ENCODE measurements at regions of chr21 and their contacts with region 1.

Region 1: GRCh38 chr21:25385911-25386474 is 221.3 kb downstream of the MRPL39 start:
- DNase-seq: peak; percentile 47
- H3K4me3 ChIP-seq: no peak overlapping the region; a peak in 1 of 4 replicates
- H3K27ac ChIP-seq: peak overlapping the region in 1 of 2 experiments; percentile 47; a peak in 1 of 4 replicates
- H3K4me1 ChIP-seq: peaks cover 0 to 6% of the 10 kb centered on the region in 2 experiments; a peak in 3 of 4 replicates
- H3K27me3 ChIP-seq: no peaks in the 10 kb centered on the region
- CTCF ChIP-seq: peak; percentile 82
- EP300 ChIP-seq: no peak
- RAD21 ChIP-seq: peak; percentile 91

Region 2: DNA sequence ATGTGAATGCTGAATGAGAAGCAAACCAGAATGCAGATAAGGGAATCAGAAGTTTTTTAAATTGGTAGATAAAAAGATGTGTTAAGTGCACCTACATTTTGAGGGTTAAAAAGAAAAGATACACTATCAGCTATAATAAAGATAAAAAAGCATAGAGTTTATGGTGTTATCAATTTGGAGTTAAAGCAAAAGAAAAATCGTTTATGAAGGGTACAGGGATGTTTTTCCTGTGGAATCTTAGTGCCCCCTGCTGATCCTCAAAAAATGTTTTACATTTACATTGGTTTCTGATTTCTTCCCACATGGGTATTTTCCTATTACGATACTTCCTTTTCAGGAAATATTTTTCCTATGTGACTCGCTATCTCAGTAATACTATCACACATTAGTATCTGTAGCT is 72.2 kb before region 1 on chr21:
- CTCF ChIA-PET with region 1: interaction called, 24 read pairs
- POLR2A ChIA-PET with region 1: no interaction called
- DNase-seq: peak; percentile 23
- H3K4me3 ChIP-seq: peak overlapping the region in 1 of 2 experiments; percentile 13; a peak in 1 of 4 replicates
- H3K27ac ChIP-seq: peak overlapping the region in 1 of 2 experiments; percentile 86; a peak in 3 of 4 replicates
- H3K4me1 ChIP-seq: peaks cover 0 to 10% of the 10 kb centered on the region in 2 experiments; a peak in 3 of 4 replicates
- H3K27me3 ChIP-seq: no peaks in the 10 kb centered on the region
- CTCF ChIP-seq: peak; percentile 74
- EP300 ChIP-seq: peak in 1 of 2 experiments; percentile 39; a peak in 1 of 4 replicates
- RAD21 ChIP-seq: peak; percentile 91

Region 3: GRCh38 chr21:25350056-25350455 is 35.9 kb before region 1 on chr21:
- CTCF ChIA-PET with region 1: interaction called, 17 read pairs
- POLR2A ChIA-PET with region 1: no interaction called
- DNase-seq: peak; percentile 25
- H3K4me3 ChIP-seq: no peak overlapping the region
- H3K27ac ChIP-seq: no peak overlapping the region
- H3K4me1 ChIP-seq: no peaks in the 10 kb centered on the region; a peak in 1 of 4 replicates
- H3K27me3 ChIP-seq: no peaks in the 10 kb centered on the region
- CTCF ChIP-seq: peak; percentile 73
- EP300 ChIP-seq: no peak
- RAD21 ChIP-seq: peak; percentile 63

Region 4: DNA sequence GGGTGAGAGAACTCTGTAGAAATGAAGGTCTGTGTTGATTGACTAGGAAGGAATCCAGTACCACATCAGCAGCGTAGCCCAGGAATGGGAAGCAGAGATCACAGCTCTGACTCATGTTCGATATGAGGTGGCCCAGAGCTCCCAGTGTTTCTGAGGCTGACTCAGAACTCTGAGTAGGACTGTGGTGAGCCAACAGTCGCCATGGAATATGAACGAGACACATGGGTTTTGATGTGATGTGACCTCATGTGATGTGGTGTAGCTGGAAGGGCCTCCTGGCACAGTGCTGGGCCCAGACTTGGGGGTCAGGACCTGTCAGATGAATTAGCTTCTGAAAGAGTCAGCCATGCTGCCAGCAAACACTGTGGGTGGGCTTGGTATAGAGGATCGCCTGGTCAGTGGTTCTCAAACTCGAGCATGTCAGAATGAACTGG is 15.7 kb before region 1 on chr21:
- CTCF ChIA-PET with region 1: interaction called, 14 read pairs
- POLR2A ChIA-PET with region 1: no interaction called
- DNase-seq: no peak
- H3K4me3 ChIP-seq: peak overlapping the region in 1 of 2 experiments; percentile 26; a peak in 2 of 4 replicates
- H3K27ac ChIP-seq: peak overlapping the region; percentile 8 to 98; a peak in 3 of 4 replicates
- H3K4me1 ChIP-seq: peaks cover 4 to 29% of the 10 kb centered on the region in 2 experiments
- H3K27me3 ChIP-seq: no peaks in the 10 kb centered on the region
- CTCF ChIP-seq: no peak
- EP300 ChIP-seq: peak in 1 of 2 experiments; percentile 84; a peak in 2 of 4 replicates
- RAD21 ChIP-seq: no peak

Measured in SK-N-SH (cell line).